ENCODE measurements at regions of chr3 and their contacts with region 1.

Region 1: DNA sequence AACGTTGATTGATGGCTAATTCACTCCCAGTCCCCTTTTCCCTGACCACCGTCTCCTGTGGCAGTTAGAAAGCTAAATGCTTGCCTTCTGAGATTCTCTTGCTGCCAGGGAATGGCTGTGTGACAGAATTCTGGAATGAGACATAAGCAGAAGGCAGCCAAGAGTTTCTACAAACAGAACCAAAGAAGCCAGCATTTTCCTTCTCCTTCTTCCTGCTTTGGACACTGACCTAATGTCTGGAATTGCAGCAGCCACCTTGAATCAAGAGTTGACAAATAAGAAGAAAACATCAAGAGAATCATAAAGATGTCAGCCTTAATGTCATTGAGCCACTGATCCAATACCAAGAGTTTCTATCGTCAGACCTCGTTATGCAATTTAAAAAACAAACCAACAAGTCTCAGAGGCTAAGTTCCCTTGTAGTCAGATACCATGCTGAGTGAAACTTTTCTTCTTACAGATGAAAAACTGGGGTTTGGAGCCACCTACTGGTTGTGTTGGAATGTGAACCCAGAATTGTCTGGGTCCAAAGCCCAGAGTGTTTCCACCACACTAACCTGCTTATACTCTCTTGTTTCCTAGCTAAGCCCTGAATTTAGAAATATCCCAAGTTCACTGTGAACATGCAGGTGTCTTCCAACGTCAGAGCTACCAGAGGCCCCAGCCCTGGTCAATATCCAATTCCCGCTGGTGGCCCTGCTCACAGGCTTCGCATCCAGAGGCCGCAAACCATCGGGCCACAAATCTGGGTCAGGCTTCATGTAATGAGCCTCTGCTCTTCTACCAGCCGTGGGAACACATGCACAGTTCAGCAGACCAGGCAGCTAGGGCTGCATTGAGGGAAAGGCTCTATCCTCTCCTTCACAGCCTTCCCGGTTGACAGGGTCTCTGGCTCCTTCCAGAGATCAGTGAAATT is 42.5 kb downstream of the MCF2L2 start:
- DNase-seq: no peak
- ATAC-seq: peak; percentile 77 to 83
- H3K4me3 ChIP-seq: no peak overlapping the region
- H3K27ac ChIP-seq: no peak overlapping the region
- H3K4me1 ChIP-seq: peaks cover 7% of the 10 kb centered on the region
- H3K27me3 ChIP-seq: no peaks in the 10 kb centered on the region
- CTCF ChIP-seq: peak; percentile 79

Region 2: GRCh38 chr3:183122257-183122932 is 263.6 kb before region 1 on chr3:
- intact Hi-C with region 1: loop called (anchors 5 kb)
- DNase-seq: no peak
- ATAC-seq: peak; percentile 70 to 71
- H3K4me3 ChIP-seq: no peak overlapping the region
- H3K27ac ChIP-seq: no peak overlapping the region
- H3K4me1 ChIP-seq: no peaks in the 10 kb centered on the region
- H3K27me3 ChIP-seq: no peaks in the 10 kb centered on the region
- CTCF ChIP-seq: peak; percentile 85

Region 3: GRCh38 chr3:183188895-183189462 is 197.0 kb before region 1 on chr3:
- intact Hi-C with region 1: loop called (anchors 5 kb)
- DNase-seq: peak; percentile 64
- ATAC-seq: peak; percentile 55 to 61
- H3K4me3 ChIP-seq: no peak overlapping the region
- H3K27ac ChIP-seq: no peak overlapping the region
- H3K4me1 ChIP-seq: peaks cover 16% of the 10 kb centered on the region
- H3K27me3 ChIP-seq: no peaks in the 10 kb centered on the region
- CTCF ChIP-seq: peak; percentile 43

Region 4: DNA sequence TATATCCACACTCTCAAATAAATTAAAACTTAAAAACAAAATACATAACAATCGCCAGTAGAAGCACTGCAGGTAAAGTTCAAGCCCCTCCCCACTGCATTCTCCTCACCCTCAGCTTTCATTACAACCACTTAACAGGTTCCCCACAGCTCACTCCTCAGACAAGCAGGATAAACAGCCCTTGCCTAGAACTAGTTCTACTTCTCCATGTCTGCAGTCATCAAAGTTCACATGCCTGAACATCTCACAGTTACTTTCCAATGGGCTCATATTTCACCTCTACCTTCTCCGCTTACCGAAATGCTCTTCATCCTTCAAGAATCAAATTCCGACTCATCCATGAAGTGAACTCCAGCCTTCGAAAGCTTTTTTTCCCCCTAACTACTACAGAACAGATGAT is 315.8 kb after region 1 on chr3:
- intact Hi-C with region 1: no loop called
- DNase-seq: no peak
- ATAC-seq: no peak
- H3K4me3 ChIP-seq: no peak overlapping the region
- H3K27ac ChIP-seq: no peak overlapping the region
- H3K4me1 ChIP-seq: peaks cover 20% of the 10 kb centered on the region
- H3K27me3 ChIP-seq: no peaks in the 10 kb centered on the region
- CTCF ChIP-seq: no peak

Measured in lower lobe of right lung (tissue), 2 donors.